ENCODE measurements at regions of chr3 and their contacts with region 1.

Region 1: DNA sequence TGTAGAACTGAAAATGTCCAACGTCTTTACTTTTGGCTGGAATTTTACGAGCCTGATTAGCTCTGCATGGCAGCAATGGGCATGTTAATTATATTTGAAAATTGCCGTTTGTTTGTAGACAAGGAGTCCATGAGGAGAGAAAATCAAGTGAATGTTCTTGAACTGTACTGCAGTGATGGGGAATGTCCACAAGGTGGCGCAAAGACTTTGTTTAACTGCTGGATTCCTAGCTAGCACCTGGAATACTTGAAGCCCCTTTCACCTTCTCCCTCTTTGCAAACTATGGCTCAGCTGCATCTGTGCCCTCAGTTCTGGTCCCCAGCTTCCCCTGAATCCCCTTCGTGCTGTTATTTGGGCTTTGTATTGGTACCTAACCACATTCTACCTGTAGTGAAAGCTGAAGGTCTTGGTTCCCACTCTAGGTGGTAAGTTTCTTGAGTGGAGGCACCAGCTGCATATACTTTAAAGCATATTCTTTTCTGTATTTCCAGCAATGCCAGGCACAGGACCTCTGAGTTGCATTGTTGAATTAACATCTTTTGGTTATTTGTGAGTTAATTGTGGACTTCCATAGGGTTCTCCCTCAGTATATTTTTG is 25.3 kb downstream of the EXOG start:
- DNase-seq: peak in 1 of 2 donors; percentile 66
- ATAC-seq: peak; percentile 57

Region 2: GRCh38 chr3:38651154-38651789 is 129.8 kb after region 1 on chr3:
- intact Hi-C with region 1: loop called (anchors 5 to 10 kb)
- DNase-seq: peak; percentile 52 to 70
- ATAC-seq: peak; percentile 68

Measured in left colon (tissue), 2 donors.